ENCODE measurements at regions of chr11 and their contacts with region 1.

Region 1: DNA sequence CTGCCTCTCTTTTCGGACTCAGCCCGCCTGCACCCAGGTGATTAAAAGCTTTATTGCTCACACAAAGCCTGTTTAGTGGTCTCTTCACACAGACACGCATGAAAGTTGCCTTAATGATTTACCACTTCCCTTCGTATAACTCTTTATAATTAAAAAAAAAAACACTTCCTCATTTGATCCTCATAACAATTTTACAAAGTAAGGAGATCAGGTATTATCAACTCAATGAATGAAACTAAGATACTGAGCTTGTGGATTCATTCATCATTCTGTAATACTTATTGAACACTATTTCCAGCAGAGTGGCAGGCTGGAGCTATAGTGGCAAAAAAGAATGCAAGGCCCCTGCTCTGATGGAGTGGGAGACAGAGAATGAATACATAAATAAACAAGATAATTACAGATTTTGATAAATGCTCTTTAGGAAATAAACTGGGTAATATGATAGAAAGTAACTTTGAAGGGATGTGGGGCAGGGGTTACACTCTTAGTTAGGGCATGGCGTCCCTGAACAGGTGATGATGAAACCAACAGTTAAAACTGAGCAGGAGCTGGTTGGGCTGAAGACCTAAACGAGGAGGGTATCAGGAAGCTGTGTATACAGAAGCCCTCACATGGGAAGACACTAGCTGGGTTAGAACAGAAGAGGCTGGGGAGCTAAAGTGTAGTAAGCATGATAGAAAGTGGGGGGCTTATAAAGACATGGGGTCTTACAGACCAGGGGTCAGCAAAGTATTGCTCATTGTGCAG is 5.4 kb upstream of the CRTAM start:
- DNase-seq: no peak
- H3K4me3 ChIP-seq: no peak overlapping the region
- H3K27ac ChIP-seq: no peak overlapping the region
- H3K4me1 ChIP-seq: no peaks in the 10 kb centered on the region
- H3K27me3 ChIP-seq: no peaks in the 10 kb centered on the region
- CTCF ChIP-seq: no peak

Region 2: GRCh38 chr11:122367809-122368231 is 465.1 kb before region 1 on chr11:
- CTCF ChIA-PET with region 1: no interaction called
- dilution Hi-C with region 1: no loop called
- in situ Hi-C with region 1: no loop called
- intact Hi-C with region 1: no loop called
- DNase-seq: peak; percentile 20
- H3K4me3 ChIP-seq: no peak overlapping the region
- H3K27ac ChIP-seq: no peak overlapping the region
- H3K4me1 ChIP-seq: peaks cover 9% of the 10 kb centered on the region
- H3K27me3 ChIP-seq: no peaks in the 10 kb centered on the region
- CTCF ChIP-seq: no peak

Region 3: DNA sequence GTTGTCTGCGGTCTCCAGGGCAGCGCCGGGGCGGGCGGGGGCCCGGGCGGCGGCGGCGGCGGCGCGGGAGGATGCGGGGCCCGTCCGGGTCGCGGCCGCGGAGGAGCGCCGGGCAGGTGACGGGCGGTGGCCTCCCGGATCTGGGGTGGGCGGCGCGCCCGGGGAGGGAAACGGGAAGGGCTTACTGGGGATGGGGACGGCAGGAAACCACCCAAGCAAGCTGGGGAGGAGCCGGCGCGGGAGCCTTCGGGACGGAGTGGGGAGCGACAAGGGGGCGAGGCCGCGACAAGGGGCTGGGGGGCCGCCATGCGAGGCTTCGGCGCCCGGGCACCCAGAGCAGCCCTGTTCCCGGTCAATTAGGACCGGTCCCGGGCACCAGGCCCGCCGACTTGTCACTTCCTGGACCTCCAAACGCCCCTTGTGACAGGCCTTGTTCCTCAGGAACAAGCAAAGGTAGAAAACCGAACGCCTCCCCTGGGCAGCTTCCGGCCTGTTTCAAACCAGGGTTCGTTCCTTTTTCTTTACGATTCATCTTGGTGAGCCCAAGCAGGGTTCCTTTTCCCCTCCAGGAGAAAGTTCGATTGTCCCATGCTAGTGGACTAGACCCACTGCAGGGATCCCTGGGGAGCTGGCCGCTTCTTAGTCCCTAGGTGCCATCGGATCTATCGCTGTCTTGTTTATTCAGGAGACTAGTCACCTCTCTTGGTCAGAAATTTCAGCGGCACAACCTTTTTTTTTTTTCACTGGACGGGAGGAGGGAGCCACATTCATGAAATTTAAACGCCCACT is 50.2 kb after region 1 on chr11:
- CTCF ChIA-PET with region 1: interaction called, 13 read pairs
- dilution Hi-C with region 1: no loop called
- in situ Hi-C with region 1: no loop called
- intact Hi-C with region 1: no loop called
- DNase-seq: peak; percentile 61
- H3K4me3 ChIP-seq: peak overlapping the region; percentile 63 to 82 (median 76)
- H3K27ac ChIP-seq: peak overlapping the region; percentile 79
- H3K4me1 ChIP-seq: peaks cover 3% of the 10 kb centered on the region
- H3K27me3 ChIP-seq: no peaks in the 10 kb centered on the region
- CTCF ChIP-seq: no peak

Measured in mammary epithelial cell (primary cell).